Posterior vena cava (tissue), 2 donors: ENCODE measurements at regions of chr1 and their contacts with region 1.

Region 1: DNA sequence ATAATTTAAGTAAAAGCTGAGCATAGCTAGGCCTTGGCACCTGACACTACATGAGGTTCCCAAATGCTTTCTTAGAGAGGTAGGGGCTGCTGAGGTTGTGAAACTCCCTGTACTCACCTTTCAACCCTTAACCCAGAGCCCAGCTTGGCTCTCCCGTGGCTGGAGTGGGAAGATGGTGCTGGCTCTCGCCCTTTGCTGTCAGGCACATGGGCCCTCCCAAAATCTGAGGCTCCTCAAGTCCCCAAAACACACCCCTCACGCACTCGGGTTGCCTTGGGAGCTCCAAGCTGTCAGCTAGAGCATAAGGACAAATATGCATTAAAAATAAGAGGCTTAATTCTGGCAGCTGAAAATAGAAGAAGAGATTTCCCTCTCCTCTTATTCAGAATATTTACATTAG is 46.7 kb upstream of the PLPPR4 start:
- DNase-seq: no peak

Region 2: GRCh38 chr1:99252630-99253029 is 35.0 kb after region 1 on chr1:
- intact Hi-C with region 1: loop called in 1 of 2 experiments (anchors 1 kb)
- DNase-seq: no peak